Activated T-helper 1 cell treated with anti-CD3 and anti-CD28 coated beads, Interleukin-12 subunit alpha, Interleukin-12 subunit beta, Interleukin-2, Interleukin-4 antibody, amounts not matched to agents 30 ng/mL and 10 ng/mL and 1 ng/mL, durations not matched to agents 14 hours and 24 hours and 36 hours (primary cell): ENCODE measurements at regions of chr6 and their contacts with region 1.

Region 1: GRCh38 chr6:26322645-26323482 is 42.1 kb upstream of the BTN3A2 start:
- DNase-seq: peak; percentile 63
- H3K4me3 Mint-ChIP-seq: peak overlapping the region; percentile 89
- H3K27ac Mint-ChIP-seq: peak overlapping the region; percentile 51
- H3K4me1 Mint-ChIP-seq: peaks cover 51% of the 10 kb centered on the region
- H3K27me3 Mint-ChIP-seq: peaks cover 14% of the 10 kb centered on the region

Region 2: GRCh38 chr6:25173951-25174474 is 1148.9 kb before region 1 on chr6:
- intact Hi-C with region 1: no loop called
- DNase-seq: no peak
- H3K4me3 Mint-ChIP-seq: no peak overlapping the region
- H3K27ac Mint-ChIP-seq: peak overlapping the region; percentile 71
- H3K4me1 Mint-ChIP-seq: peaks cover 99% of the 10 kb centered on the region
- H3K27me3 Mint-ChIP-seq: no peaks in the 10 kb centered on the region

Region 3: GRCh38 chr6:26312501-26313390 is 10.1 kb before region 1 on chr6:
- intact Hi-C with region 1: loop called (anchors 1 kb)
- DNase-seq: peak; percentile 72
- H3K4me3 Mint-ChIP-seq: peak overlapping the region; percentile 84
- H3K27ac Mint-ChIP-seq: peak overlapping the region; percentile 92
- H3K4me1 Mint-ChIP-seq: peaks cover 51% of the 10 kb centered on the region
- H3K27me3 Mint-ChIP-seq: no peaks in the 10 kb centered on the region

Region 4: GRCh38 chr6:26553635-26554446 is 231.0 kb after region 1 on chr6:
- intact Hi-C with region 1: loop called (anchors 1 kb)
- DNase-seq: peak; percentile 72
- H3K4me3 Mint-ChIP-seq: no peak overlapping the region
- H3K27ac Mint-ChIP-seq: no peak overlapping the region
- H3K4me1 Mint-ChIP-seq: peaks cover 18% of the 10 kb centered on the region
- H3K27me3 Mint-ChIP-seq: peaks cover 2% of the 10 kb centered on the region

Region 5: DNA sequence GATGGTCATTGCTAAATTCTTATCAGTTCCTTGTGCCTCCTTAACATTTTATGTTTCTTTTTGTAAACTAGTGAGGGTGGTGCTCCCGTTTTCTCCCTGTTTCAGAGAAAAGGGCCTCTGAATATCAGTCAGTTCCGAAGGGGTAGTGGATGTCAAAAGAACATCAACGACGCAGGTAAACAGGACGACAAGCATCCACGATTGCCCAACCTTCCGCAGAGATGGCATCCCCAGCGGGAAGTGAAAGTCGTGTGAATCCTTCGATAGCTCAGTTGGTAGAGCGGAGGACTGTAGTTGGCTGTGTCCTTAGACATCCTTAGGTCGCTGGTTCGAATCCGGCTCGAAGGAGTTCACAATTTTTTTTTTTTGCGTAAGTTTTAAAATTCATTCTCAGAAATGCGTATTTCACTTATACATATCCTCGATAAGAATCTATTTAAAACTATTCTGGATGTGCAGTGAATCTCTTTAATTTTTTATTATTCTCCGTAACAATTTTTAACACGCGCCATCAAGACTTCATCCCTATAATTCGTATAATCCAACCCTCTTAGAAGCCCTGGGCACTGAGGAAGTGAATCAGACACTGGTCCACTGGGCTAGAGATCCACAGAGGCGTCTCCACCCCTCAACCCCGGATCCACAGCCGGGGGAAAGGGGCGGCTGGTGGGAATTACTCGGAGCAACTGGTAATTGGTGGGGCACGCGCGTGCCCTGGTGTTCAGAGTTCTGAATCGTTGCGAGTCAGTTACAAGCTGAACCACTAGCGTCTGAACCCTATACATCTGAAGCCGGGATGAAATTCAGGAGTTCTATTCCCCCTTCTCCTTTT is 246.0 kb after region 1 on chr6:
- intact Hi-C with region 1: loop called (anchors 1 kb)
- DNase-seq: peak; percentile 94
- H3K4me3 Mint-ChIP-seq: peak overlapping the region; percentile 93
- H3K27ac Mint-ChIP-seq: peak overlapping the region; percentile 98
- H3K4me1 Mint-ChIP-seq: peaks cover 47% of the 10 kb centered on the region
- H3K27me3 Mint-ChIP-seq: peaks cover 5% of the 10 kb centered on the region

Region 6: DNA sequence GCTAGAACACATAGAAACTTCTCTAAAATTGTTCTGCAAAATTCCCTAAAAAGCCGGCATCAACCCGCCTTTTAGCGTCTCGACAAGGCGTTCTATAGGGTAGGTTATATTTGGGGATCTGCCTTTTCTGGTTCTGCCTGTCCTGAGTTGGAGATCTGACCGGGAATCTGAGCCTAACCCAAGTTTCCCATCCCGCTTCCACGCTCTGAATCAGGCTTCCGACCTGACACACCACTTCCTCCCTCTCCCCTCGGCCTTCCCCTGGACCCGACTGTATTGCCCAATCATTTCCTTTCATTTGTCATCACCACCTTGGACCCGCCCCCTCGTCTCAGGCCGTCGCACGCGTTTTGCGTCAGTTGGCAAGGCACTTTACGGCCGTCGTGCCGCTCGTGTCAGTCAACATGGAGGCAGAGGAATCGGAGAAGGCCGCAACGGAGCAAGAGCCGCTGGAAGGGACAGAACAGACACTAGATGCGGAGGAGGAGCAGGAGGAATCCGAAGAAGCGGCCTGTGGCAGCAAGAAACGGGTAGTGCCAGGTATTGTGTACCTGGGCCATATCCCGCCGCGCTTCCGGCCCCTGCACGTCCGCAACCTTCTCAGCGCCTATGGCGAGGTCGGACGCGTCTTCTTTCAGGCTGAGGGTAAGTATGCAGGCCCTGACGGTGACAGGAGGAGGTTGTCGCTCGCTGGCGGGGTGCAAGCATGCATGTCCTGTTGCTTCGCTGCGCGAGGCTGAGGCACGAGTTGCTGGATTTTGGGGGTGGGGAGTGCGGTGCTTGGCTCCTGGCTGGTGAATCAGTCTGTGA is 273.9 kb after region 1 on chr6 and contains the start of gene ABT1:
- intact Hi-C with region 1: loop called (anchors 1 kb)
- DNase-seq: peak; percentile 97
- H3K4me3 Mint-ChIP-seq: no peak within 1 kb of the TSS
- H3K27ac Mint-ChIP-seq: no peak within 1 kb of the TSS
- H3K4me1 Mint-ChIP-seq: peaks cover 39% of the 10 kb centered on the region
- H3K27me3 Mint-ChIP-seq: peaks cover 27% of the 10 kb centered on the region
- total RNA-seq, gene ABT1: 32.6 and 32.9 TPM in 2 replicates

Region 7: GRCh38 chr6:27091661-27092646 is 769.1 kb after region 1 on chr6:
- intact Hi-C with region 1: loop called (anchors 10 kb)
- DNase-seq: no peak
- H3K4me3 Mint-ChIP-seq: peak overlapping the region; percentile 76
- H3K27ac Mint-ChIP-seq: peak overlapping the region; percentile 18
- H3K4me1 Mint-ChIP-seq: peaks cover 19% of the 10 kb centered on the region
- H3K27me3 Mint-ChIP-seq: peaks cover 59% of the 10 kb centered on the region

Region 8: GRCh38 chr6:27503436-27504030 is 1180.7 kb after region 1 on chr6:
- intact Hi-C with region 1: loop called (anchors 5 kb)
- DNase-seq: peak; percentile 60
- H3K4me3 Mint-ChIP-seq: peak overlapping the region; percentile 90
- H3K27ac Mint-ChIP-seq: peak overlapping the region; percentile 82
- H3K4me1 Mint-ChIP-seq: peaks cover 32% of the 10 kb centered on the region
- H3K27me3 Mint-ChIP-seq: peaks cover 42% of the 10 kb centered on the region